A549 (cell line): ENCODE measurements at regions of chr2 and their contacts with region 1.

Region 1: DNA sequence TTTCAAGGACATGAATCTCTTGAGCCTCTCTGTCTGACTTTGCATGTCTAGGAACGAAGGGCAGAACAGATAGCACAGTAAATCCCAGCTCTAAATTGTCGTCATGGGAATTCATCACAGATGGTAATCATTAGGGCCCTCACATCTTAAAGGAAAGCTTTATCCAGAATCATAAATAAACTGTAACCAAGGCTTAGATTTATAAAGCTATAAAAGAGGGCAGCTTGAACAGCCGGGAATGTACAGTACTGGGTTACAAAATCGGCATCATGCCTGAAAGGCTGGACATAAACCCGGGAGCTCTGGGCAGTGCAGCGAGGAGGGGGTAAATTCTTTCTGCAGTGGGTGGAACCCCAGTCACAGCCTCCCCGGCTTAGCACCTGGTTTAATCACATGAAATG is 144.4 kb downstream of the GFPT1 start:
- DNase-seq: no peak
- ATAC-seq: no peak
- H3K4me3 ChIP-seq: no peak overlapping the region
- H3K27ac ChIP-seq: peak overlapping the region in 1 of 2 experiments; percentile 49; a peak in 1 of 6 replicates
- H3K4me1 ChIP-seq: peaks cover 8% of the 10 kb centered on the region
- CTCF ChIP-seq: no peak
- EP300 ChIP-seq: no peak
- POLR2A ChIP-seq: no peak
- RAD21 ChIP-seq: no peak

Region 2: DNA sequence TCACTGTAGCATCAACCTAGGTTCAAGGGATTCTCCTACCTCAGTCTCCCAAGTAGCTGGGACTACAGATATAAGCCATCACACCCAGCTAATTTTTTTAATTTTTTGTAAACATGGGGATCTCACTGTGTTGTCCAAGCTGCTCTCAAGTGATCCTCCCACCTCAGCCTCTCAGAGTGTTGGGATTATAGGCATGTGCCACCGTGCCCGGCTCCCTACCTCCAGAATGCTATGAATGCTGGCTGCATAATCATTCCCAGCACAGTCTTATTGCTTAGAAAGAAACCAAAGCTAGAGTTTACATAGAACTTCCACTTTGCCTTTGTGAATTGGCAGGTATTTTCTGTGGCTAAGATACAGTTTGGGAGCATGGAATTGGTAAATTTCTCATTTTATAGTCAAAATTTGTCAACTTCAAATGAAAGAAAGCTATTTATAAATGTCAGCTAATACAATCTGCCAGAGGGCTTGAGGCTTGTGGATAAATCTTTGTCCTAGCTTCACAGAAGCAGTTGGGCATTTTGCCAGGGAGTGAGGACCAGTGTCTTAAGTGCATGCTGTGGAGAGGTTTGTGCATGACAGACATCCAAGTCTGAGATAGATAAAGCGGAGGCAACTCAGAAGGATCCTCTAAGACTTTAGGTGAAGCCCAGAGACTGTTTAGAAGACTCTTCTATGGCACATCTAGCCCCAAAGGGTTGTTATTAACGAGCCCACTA is 54.3 kb before region 1 on chr2:
- CTCF ChIA-PET with region 1: interaction called, 3 read pairs
- POLR2A ChIA-PET with region 1: interaction called, 10 read pairs
- DNase-seq: no peak
- ATAC-seq: no peak
- H3K4me3 ChIP-seq: no peak overlapping the region
- H3K27ac ChIP-seq: no peak overlapping the region
- H3K4me1 ChIP-seq: no peaks in the 10 kb centered on the region
- CTCF ChIP-seq: no peak
- EP300 ChIP-seq: no peak
- POLR2A ChIP-seq: no peak
- RAD21 ChIP-seq: no peak

Region 3: DNA sequence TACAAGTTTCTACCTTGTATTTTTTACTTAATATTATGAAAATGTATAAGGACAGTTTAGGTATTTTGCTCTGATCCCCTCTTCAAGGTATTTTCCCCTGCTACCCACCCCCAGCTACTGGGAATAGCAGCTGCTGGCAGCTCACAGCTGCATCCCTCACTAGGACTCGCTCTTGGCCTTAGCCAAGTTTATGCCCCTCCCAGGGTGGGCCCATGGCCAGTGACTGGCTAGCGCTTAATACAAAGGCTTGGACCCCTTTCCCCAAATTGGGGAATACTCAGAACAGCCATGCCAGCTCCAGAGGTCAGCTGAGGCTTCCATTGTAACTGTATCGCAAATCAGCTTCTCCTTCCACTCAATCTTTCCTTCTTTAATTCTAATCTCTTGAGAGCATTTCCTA is 13.1 kb after region 1 on chr2:
- CTCF ChIA-PET with region 1: no interaction called
- POLR2A ChIA-PET with region 1: no interaction called
- DNase-seq: no peak
- ATAC-seq: no peak
- H3K4me3 ChIP-seq: no peak overlapping the region
- H3K27ac ChIP-seq: peak overlapping the region; percentile 84 to 91
- H3K4me1 ChIP-seq: peaks cover 48% of the 10 kb centered on the region
- CTCF ChIP-seq: no peak
- EP300 ChIP-seq: no peak
- POLR2A ChIP-seq: no peak
- RAD21 ChIP-seq: no peak

Region 4: GRCh38 chr2:69565431-69565839 is 322.8 kb after region 1 on chr2:
- CTCF ChIA-PET with region 1: no interaction called
- POLR2A ChIA-PET with region 1: no interaction called
- DNase-seq: peak; percentile 50 to 70
- ATAC-seq: peak; percentile 66 to 82; a peak in 5 of 6 replicates
- H3K4me3 ChIP-seq: no peak overlapping the region
- H3K27ac ChIP-seq: no peak overlapping the region
- H3K4me1 ChIP-seq: peaks cover 55% of the 10 kb centered on the region
- CTCF ChIP-seq: peak; percentile 80
- EP300 ChIP-seq: no peak
- POLR2A ChIP-seq: no peak
- RAD21 ChIP-seq: peak; percentile 45 to 54; a peak in 4 of 5 replicates